Endothelial cell of umbilical vein (primary cell): ENCODE measurements at regions of chrX and their contacts with region 1.

Region 1: GRCh38 chrX:153609917-153610428 is 11.0 kb upstream of the CCNQ start:
- DNase-seq: peak; percentile 65
- H3K4me3 ChIP-seq: peak overlapping the region in 2 of 3 experiments; percentile 11 to 19
- H3K27ac ChIP-seq: no peak overlapping the region
- H3K4me1 ChIP-seq: no peaks in the 10 kb centered on the region
- H3K27me3 ChIP-seq: peaks cover 4 to 6% of the 10 kb centered on the region in 2 experiments
- CTCF ChIP-seq: peak; percentile 63 to 88
- POLR2A ChIP-seq: no peak

Region 2: DNA sequence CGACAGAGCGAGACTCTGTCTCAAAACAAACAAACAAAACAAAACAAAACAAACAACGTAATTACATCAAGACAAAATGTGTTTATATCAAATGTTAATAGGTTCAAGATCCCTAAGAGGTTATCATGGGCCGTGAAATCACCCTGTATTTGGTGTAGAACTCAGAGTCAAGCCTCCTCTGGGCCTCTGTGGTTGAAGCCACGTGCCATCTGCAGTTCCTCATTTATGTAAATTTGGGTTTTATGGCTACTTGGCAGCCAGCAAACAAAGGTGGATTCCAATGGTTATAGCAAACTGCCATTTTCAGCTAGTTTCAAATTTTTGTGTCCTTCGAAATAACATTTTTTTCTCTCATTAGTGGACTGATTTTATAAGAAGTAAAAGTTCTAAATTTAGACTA is 762.7 kb before region 1 on chrX:
- CTCF ChIA-PET with region 1: no interaction called
- POLR2A ChIA-PET with region 1: no interaction called
- dilution Hi-C with region 1: no loop called
- intact Hi-C with region 1: no loop called
- DNase-seq: no peak
- H3K4me3 ChIP-seq: no peak overlapping the region
- H3K27ac ChIP-seq: no peak overlapping the region
- H3K4me1 ChIP-seq: peaks cover 8% of the 10 kb centered on the region
- H3K27me3 ChIP-seq: no peaks in the 10 kb centered on the region
- CTCF ChIP-seq: no peak
- POLR2A ChIP-seq: no peak

Region 3: DNA sequence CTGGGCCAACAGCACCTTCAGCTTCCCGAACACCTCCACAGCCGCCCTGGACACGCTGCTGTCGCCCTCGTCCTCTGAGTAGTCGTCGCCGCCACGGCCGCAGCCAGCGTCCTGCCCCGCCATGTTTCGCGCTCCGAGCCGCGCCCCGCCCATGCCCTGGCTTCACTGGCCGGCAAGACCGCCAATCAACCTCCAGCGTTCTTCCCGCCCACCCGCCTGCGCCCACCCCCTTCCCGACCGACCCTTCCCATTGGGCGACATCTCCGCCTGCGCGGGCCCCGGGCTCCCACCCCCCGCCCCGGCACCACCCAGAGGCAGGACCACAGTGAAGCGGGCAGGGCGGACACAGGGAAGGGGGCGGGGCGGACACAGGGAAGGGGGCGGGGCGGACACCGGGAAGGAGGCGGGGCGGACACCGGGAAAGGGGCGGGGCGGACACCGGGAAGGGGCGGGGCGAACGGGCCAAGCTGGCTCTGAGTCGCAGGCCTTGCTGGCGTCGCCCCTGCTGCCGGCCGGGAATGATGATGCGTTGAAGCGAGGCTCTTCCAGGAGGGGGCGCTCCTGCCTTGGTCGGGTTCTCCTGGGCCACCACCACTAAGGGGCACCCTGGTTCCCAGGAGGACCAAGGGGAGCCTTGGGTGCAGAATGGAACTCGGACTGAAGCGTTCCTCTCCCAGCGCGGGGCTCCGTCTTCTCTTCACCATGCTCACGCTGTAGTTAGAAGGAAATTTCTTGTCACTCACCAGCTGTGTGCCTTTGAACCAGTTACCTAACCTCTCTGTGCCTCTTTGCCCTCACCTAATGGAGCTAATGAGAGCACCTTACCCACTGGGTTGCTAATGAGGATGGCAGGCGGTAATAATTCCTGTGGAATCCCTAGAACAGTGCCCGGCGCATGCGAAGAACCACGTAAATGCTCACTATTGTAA is 139.3 kb before region 1 on chrX and contains the start of gene HAUS7:
- CTCF ChIA-PET with region 1: no interaction called
- POLR2A ChIA-PET with region 1: no interaction called
- dilution Hi-C with region 1: no loop called
- intact Hi-C with region 1: no loop called
- DNase-seq: peak; percentile 92
- H3K4me3 ChIP-seq: peak within 1 kb of the TSS; percentile 61 to 73 (median 64)
- H3K27ac ChIP-seq: peak within 1 kb of the TSS; percentile 53
- H3K4me1 ChIP-seq: peaks cover 15% of the 10 kb centered on the region
- H3K27me3 ChIP-seq: no peaks in the 10 kb centered on the region
- CTCF ChIP-seq: peak; percentile 51 to 74
- POLR2A ChIP-seq: no peak
- total RNA-seq, gene HAUS7: 30.6 and 46.4 TPM in 2 replicates

Region 4: DNA sequence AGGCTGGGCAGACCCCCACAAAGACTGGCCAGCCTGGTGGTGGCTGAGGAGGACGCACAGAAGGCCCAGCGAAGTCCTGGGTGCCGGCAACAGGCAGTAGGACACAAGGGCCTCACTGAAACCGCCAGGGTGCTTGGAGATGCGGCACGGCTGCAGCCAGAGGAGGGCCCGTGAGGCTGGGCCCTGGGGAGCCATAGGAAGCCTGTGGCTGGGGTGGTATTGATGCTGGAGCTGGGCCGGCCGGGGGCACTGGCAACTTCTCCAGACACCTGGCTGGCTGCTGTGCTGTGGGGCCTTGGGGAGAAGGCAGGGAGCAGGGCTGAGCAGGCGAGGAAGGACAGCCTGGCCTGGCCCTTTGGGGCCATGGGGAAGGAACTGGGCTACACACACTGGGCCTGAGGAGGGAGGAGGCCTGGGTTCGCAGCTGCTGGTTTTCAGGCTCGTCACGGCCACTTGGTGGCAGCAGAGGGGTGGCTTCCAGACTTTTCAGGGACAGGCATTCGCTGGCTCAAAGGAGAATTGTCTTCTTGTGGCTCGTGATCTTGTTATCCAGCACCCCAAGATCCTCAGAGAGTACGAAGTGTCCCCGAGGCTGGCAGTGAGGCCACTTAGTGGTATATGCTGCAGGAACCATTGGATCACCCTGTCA is 55.3 kb before region 1 on chrX:
- CTCF ChIA-PET with region 1: interaction called, 13 read pairs
- POLR2A ChIA-PET with region 1: no interaction called
- dilution Hi-C with region 1: no loop called
- intact Hi-C with region 1: no loop called
- DNase-seq: peak; percentile 24
- H3K4me3 ChIP-seq: no peak overlapping the region
- H3K27ac ChIP-seq: no peak overlapping the region
- H3K4me1 ChIP-seq: no peaks in the 10 kb centered on the region
- H3K27me3 ChIP-seq: no peaks in the 10 kb centered on the region
- CTCF ChIP-seq: peak; percentile 48 to 71
- POLR2A ChIP-seq: no peak

Region 5: GRCh38 chrX:153599192-153600031 is 10.6 kb before region 1 on chrX:
- CTCF ChIA-PET with region 1: interaction called, 32 read pairs
- POLR2A ChIA-PET with region 1: no interaction called
- dilution Hi-C with region 1: no loop called
- intact Hi-C with region 1: no loop called
- DNase-seq: peak; percentile 83
- H3K4me3 ChIP-seq: peak overlapping the region; percentile 21 to 74 (median 57)
- H3K27ac ChIP-seq: peak overlapping the region; percentile 12
- H3K4me1 ChIP-seq: peaks cover 7% of the 10 kb centered on the region
- H3K27me3 ChIP-seq: no peaks in the 10 kb centered on the region
- CTCF ChIP-seq: no peak
- POLR2A ChIP-seq: no peak

Region 6: DNA sequence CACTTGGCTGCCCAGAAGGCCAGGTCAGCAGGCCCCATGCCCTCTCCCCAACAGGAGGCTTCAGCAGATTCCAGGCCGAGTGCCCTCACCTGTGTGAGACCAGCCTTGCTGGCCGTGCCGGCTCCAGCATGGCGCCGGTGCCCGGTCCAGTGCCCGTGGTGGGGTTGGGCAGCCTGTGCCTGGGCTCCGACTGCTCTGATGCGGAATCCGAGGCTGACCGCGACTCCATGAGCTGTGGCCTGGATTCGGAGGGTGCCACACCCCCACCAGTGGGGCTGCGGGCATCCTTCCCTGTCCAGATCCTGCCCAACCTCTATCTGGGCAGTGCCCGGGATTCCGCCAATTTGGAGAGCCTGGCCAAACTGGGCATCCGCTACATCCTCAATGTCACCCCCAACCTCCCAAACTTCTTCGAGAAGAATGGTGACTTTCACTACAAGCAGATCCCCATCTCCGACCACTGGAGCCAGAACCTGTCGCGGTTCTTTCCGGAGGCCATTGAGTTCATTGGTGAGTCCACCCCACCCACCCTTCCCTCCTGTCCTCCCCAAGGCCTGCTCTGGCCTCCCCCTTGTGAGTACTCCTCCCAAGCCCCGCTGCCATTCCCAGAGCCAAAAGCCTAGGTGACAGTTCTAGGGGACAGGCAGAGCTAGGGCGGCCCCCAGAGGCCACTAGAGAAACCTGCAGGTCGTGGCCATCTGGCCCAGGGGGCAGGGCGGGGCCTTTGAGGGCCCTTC is 39.4 kb after region 1 on chrX:
- CTCF ChIA-PET with region 1: interaction called, 12 read pairs
- POLR2A ChIA-PET with region 1: no interaction called
- dilution Hi-C with region 1: no loop called
- intact Hi-C with region 1: no loop called
- DNase-seq: no peak
- H3K4me3 ChIP-seq: no peak overlapping the region
- H3K27ac ChIP-seq: no peak overlapping the region
- H3K4me1 ChIP-seq: no peaks in the 10 kb centered on the region
- H3K27me3 ChIP-seq: peaks cover 34 to 38% of the 10 kb centered on the region in 2 experiments
- CTCF ChIP-seq: peak; percentile 19 to 51
- POLR2A ChIP-seq: no peak

Region 7: DNA sequence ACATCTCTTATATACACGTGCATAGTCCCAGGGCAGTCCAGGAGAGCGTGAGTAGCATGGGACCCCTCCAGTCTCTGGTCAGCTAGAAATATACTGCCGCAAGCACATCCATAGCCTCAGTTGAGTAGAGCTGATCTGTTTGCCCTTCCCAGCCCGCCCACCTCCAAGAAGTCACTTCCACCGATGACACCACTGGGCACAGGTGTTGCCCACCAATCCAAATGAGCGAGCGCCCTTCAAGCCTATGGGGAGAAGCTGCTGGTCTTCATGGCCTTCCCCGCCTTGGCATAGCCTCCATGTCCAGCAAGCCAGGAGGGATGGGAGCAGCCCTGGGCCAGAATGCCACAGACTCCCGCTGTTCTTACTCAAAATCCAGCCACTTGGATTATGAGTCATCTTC is 47.2 kb after region 1 on chrX:
- CTCF ChIA-PET with region 1: interaction called, 20 read pairs
- POLR2A ChIA-PET with region 1: no interaction called
- dilution Hi-C with region 1: no loop called
- intact Hi-C with region 1: no loop called
- DNase-seq: no peak
- H3K4me3 ChIP-seq: no peak overlapping the region
- H3K27ac ChIP-seq: no peak overlapping the region
- H3K4me1 ChIP-seq: no peaks in the 10 kb centered on the region
- H3K27me3 ChIP-seq: peaks cover 0 to 9% of the 10 kb centered on the region in 2 experiments
- CTCF ChIP-seq: no peak
- POLR2A ChIP-seq: no peak

Region 8: GRCh38 chrX:153662266-153662665 is 52.3 kb after region 1 on chrX:
- CTCF ChIA-PET with region 1: interaction called, 51 read pairs
- POLR2A ChIA-PET with region 1: no interaction called
- dilution Hi-C with region 1: no loop called
- intact Hi-C with region 1: no loop called
- DNase-seq: peak; percentile 39
- H3K4me3 ChIP-seq: no peak overlapping the region
- H3K27ac ChIP-seq: no peak overlapping the region
- H3K4me1 ChIP-seq: no peaks in the 10 kb centered on the region
- H3K27me3 ChIP-seq: peaks cover 1 to 14% of the 10 kb centered on the region in 2 experiments
- CTCF ChIP-seq: peak; percentile 46 to 50
- POLR2A ChIP-seq: no peak

Region 9: DNA sequence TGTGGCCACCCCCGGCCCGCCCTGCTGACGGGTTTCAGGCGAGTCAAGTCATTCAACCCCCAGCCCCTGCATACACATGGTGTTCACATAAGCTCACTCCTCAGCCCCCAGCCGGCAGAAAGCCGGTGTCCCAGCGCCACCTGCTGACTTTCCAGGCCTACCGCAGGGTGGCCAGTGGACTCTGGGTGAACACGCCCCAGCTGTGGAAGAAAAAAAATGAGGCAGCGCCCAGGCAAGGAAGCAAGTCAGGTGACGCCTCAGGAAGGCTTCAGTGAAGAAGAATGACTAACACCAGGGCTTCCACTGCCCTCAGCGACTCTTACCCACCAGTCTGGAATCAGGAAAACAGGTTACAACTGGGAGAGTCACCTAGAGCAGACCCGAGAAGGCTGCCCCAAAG is 98.4 kb after region 1 on chrX:
- CTCF ChIA-PET with region 1: interaction called, 16 read pairs
- POLR2A ChIA-PET with region 1: no interaction called
- dilution Hi-C with region 1: no loop called
- intact Hi-C with region 1: loop called (anchors 2 kb)
- DNase-seq: peak; percentile 77
- H3K4me3 ChIP-seq: no peak overlapping the region
- H3K27ac ChIP-seq: no peak overlapping the region
- H3K4me1 ChIP-seq: peaks cover 12% of the 10 kb centered on the region
- H3K27me3 ChIP-seq: no peaks in the 10 kb centered on the region
- CTCF ChIP-seq: peak; percentile 66 to 67
- POLR2A ChIP-seq: no peak